ENCODE measurements at regions of chr3 and their contacts with region 1.

Region 1: GRCh38 chr3:146594843-146595482 is 10.2 kb downstream of the PLSCR5 start:
- DNase-seq: no peak
- ATAC-seq: no peak
- H3K4me3 Mint-ChIP-seq: no peak overlapping the region
- H3K27ac Mint-ChIP-seq: no peak overlapping the region
- H3K4me1 Mint-ChIP-seq: no peaks in the 10 kb centered on the region
- H3K27me3 Mint-ChIP-seq: peaks cover 5% of the 10 kb centered on the region
- CTCF ChIP-seq: peak; percentile 58

Region 2: DNA sequence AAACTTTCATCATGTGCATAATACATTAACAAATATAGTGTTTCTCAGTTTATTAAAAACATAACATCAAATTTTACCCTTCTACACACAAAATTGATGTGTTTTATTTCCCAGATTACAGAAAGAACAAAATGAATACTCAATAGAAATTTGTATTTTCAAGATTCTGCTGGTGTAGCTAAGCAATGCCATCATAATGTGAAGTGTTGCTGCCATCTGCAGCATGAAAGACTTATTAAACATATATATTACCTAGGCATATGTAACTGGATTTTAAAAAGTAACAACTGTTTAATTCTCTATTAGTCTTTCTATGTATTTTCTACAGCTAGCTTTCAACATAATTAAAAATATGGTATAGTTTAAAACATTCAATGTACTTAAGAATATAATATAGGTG is 17.3 kb before region 1 on chr3:
- CTCF ChIA-PET with region 1: interaction called, 11 read pairs
- POLR2A ChIA-PET with region 1: no interaction called
- intact Hi-C with region 1: no loop called
- DNase-seq: peak; percentile 62
- ATAC-seq: no peak
- H3K4me3 Mint-ChIP-seq: no peak overlapping the region
- H3K27ac Mint-ChIP-seq: no peak overlapping the region
- H3K4me1 Mint-ChIP-seq: peaks cover 2% of the 10 kb centered on the region
- H3K27me3 Mint-ChIP-seq: no peaks in the 10 kb centered on the region
- CTCF ChIP-seq: peak; percentile 70

Measured in activated CD8-positive, alpha-beta T cell treated with anti-CD3 and anti-CD28 coated beads for 36 hours (primary cell).